Adrenal gland (tissue), 19 donors: ENCODE measurements at regions of chr6 and their contacts with region 1.

Region 1: DNA sequence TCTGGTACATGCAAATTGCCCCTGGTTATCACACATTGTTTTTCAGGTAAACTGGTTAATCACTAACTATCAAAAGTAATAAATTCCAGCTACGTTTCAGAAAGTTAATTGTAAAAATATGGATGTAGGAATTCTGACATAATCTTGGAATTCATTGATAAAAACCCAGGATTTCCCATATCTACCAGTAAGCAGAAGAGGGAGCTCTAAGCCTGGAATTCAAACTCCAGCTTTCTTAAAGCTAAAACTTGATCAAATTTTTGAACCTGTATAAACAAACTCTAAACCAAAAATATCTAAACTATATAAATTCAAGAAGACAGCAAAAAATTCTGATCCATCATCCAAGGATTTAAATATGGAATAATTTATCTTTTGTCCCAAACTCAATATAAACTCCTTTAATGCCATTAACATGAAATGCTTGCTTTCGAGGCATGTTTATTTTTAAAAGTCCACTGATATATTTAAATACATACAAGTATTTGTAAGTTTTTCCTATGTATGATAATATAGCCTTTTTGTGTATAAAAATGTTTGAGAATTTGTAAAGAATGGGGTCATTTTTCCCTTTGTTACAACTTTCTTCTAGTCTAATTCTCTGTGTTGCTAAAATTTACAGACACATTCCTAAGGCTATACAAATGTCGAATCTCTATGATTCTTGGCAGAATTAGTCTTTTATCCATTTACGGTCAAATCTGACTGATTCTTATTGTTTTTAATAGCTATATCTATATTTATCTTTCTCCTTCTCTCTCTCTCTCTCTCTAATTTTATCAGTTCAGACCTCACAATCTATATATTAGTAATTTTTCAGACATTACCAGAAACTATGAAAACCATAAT is 91.4 kb upstream of the RNF217 start:
- DNase-seq: peak in 1 of 7 donors; percentile 17
- H3K4me3 ChIP-seq: no peak overlapping the region
- H3K27ac ChIP-seq: no peak overlapping the region
- H3K4me1 ChIP-seq: no peaks in the 10 kb centered on the region
- H3K27me3 ChIP-seq: no peaks in the 10 kb centered on the region
- CTCF ChIP-seq: peak; percentile 39 to 89 (median 80)
- POLR2A ChIP-seq: no peak

Region 2: DNA sequence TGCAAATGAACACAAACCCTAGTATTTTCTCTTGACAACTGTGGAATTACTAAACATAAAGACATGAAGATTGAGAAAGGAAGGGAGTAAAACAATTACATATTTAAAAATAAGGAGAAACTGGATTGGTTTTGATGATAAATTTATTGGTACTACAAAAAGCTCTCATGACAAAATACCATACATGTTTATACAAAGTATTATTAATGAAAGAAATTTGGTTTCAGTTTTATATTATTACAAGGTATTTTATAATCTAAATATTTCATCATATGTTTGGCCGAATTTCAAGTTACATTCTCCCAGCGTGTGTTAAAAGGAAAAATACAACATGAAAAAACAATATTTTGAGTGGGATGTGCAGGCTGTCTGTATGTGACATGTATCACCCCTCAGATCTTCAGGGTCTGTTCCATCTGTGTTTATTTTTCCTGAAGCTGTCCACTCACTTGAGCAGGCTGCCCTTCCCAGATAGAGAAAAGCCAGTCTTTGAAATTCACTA is 498.8 kb before region 1 on chr6:
- intact Hi-C with region 1: no loop called
- DNase-seq: no peak
- H3K4me3 ChIP-seq: no peak overlapping the region
- H3K27ac ChIP-seq: no peak overlapping the region
- H3K4me1 ChIP-seq: no peaks in the 10 kb centered on the region
- H3K27me3 ChIP-seq: no peaks in the 10 kb centered on the region
- CTCF ChIP-seq: no peak
- POLR2A ChIP-seq: no peak

Region 3: DNA sequence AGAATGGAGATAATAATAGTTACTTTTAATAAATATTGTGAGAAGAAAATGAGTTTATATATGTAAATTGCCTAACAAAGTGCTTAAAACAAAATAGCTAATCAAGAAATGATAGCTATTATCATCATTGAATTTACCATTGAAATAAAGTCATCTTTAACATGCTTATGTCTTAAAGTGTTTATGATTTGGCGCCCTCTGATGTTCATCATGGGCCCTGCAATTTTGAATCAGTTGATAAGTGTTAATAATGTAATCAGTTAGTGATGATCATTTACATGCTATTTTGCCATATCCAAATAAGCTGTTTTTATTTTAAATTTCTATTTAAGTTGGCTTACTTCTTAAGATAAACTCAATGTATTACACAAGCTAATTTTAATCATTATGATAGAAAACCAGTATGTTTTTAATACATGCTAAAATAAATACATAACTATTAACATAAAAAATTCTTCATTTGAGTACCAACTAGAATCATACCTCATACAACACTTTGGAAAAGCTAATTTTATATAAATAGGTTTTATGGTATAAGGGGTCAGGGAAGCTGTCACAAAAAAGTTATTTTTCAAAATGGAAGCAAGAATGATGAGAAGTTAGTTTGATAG is 243.5 kb after region 1 on chr6:
- intact Hi-C with region 1: loop called (anchors 2 to 5 kb)
- DNase-seq: peak in 6 of 7 donors; percentile 43 to 85 (median 63)
- H3K4me3 ChIP-seq: no peak overlapping the region
- H3K27ac ChIP-seq: no peak overlapping the region
- H3K4me1 ChIP-seq: no peaks in the 10 kb centered on the region
- H3K27me3 ChIP-seq: no peaks in the 10 kb centered on the region
- CTCF ChIP-seq: peak; percentile 74 to 92 (median 83)
- POLR2A ChIP-seq: no peak

Region 4: GRCh38 chr6:125764121-125764671 is 893.4 kb after region 1 on chr6:
- intact Hi-C with region 1: loop called in 1 of 2 experiments (anchors 10 kb)
- DNase-seq: no peak
- H3K4me3 ChIP-seq: no peak overlapping the region
- H3K27ac ChIP-seq: no peak overlapping the region
- H3K4me1 ChIP-seq: no peaks in the 10 kb centered on the region
- H3K27me3 ChIP-seq: peaks cover 11% of the 10 kb centered on the region
- CTCF ChIP-seq: no peak
- POLR2A ChIP-seq: no peak